ENCODE measurements at regions of chr17 and their contacts with region 1.

Region 1: GRCh38 chr17:46266656-46267544 is 28.0 kb upstream of the LRRC37A start:
- DNase-seq: peak; percentile 37
- ATAC-seq: peak; percentile 95
- H3K4me3 ChIP-seq: peak overlapping the region; percentile 77
- H3K27ac ChIP-seq: peak overlapping the region; percentile 20
- H3K4me1 ChIP-seq: peaks cover 13% of the 10 kb centered on the region
- H3K27me3 ChIP-seq: no peaks in the 10 kb centered on the region; a peak in 2 of 4 replicates
- CTCF ChIP-seq: no peak
- EP300 ChIP-seq: no peak
- POLR2A ChIP-seq: peak; percentile 90
- RAD21 ChIP-seq: no peak

Region 2: DNA sequence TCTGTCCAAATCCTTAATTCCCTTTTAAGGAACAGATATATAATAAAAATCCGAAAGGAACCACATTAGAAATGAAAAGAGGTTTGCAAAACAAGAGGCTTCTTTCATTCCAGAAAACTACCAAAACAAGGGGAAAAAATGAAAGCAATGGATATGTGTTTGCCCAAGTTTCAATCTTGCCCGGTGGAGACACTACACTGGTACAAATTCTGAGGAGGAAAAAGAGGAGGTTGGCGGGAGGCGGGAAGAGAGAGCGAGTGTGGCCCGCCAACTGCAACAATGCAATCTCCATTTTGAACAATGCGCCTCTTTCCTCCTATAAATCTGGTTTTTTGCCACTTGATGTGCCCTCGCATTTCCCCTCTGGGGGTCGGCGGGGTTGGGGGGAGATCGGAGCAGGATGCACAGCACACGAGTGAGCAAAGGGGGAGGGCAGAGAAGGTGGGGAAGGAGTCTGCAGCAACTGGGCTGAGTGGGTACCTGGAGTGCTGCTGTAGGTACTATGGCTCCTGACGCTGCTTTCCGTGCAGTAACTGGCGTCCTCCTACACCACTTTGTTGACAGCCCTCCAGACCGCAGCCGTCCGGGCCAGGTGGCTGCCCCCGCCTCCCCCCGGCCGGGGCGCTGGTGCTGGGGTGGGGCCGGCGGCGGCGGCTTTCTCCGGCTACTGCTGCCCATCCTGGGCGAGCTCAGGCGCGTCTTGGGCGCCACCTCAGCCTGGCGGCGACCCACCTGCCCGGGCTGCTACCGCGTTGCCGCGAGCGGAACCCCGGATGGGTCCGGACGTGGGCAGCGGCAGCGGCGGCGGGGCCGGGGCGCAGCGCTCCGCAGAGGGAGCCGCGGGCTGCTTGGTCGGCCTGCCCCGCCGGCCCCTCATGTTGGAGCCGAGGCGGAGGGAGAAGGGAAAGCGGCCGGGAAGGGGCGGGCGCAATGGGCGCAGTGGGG is 682.5 kb before region 1 on chr17:
- CTCF ChIA-PET with region 1: no interaction called
- POLR2A ChIA-PET with region 1: no interaction called
- RAD21 ChIA-PET with region 1: no interaction called
- SMC1A ChIA-PET with region 1: no interaction called
- in situ Hi-C with region 1: loop called (anchors 25 kb)
- intact Hi-C with region 1: no loop called
- DNase-seq: no peak
- ATAC-seq: peak; percentile 78
- H3K4me3 ChIP-seq: peak overlapping the region; percentile 73
- H3K27ac ChIP-seq: peak overlapping the region; percentile 84
- H3K4me1 ChIP-seq: peaks cover 12% of the 10 kb centered on the region; the same call in 1 of the 2 replicates
- H3K27me3 ChIP-seq: no peaks in the 10 kb centered on the region
- CTCF ChIP-seq: no peak
- EP300 ChIP-seq: no peak; a peak in 1 of 4 replicates
- POLR2A ChIP-seq: peak; percentile 82
- RAD21 ChIP-seq: no peak; the same call in 1 of the 2 replicates

Region 3: GRCh38 chr17:46002311-46002972 is 264.5 kb before region 1 on chr17:
- CTCF ChIA-PET with region 1: interaction called, 4 read pairs
- POLR2A ChIA-PET with region 1: no interaction called
- RAD21 ChIA-PET with region 1: interaction called, 4 read pairs
- SMC1A ChIA-PET with region 1: no interaction called
- in situ Hi-C with region 1: loop called (anchors 5 kb)
- intact Hi-C with region 1: no loop called
- DNase-seq: peak; percentile 16
- ATAC-seq: peak; percentile 96
- H3K4me3 ChIP-seq: no peak overlapping the region
- H3K27ac ChIP-seq: no peak overlapping the region
- H3K4me1 ChIP-seq: no peaks in the 10 kb centered on the region
- H3K27me3 ChIP-seq: no peaks in the 10 kb centered on the region
- CTCF ChIP-seq: peak; percentile 86 to 93 (median 87); a peak in 5 of 6 replicates
- EP300 ChIP-seq: no peak
- POLR2A ChIP-seq: no peak
- RAD21 ChIP-seq: peak; percentile 89